ENCODE measurements at regions of chr19 and their contacts with region 1.

Region 1: GRCh38 chr19:16062789-16063188 is 13.5 kb upstream of the TPM4 start:
- DNase-seq: peak; percentile 78
- ATAC-seq: peak; percentile 85
- H3K4me3 ChIP-seq: no peak overlapping the region
- H3K4me3 Mint-ChIP-seq: no peak overlapping the region
- H3K27ac ChIP-seq: no peak overlapping the region
- H3K27ac Mint-ChIP-seq: no peak overlapping the region
- H3K4me1 ChIP-seq: peaks cover 4 to 11% of the 10 kb centered on the region in 2 donors
- H3K4me1 Mint-ChIP-seq: peaks cover 12% of the 10 kb centered on the region
- H3K27me3 ChIP-seq: no peaks in the 10 kb centered on the region
- H3K27me3 Mint-ChIP-seq: peaks cover 3% of the 10 kb centered on the region
- CTCF ChIP-seq: peak; percentile 96

Region 2: DNA sequence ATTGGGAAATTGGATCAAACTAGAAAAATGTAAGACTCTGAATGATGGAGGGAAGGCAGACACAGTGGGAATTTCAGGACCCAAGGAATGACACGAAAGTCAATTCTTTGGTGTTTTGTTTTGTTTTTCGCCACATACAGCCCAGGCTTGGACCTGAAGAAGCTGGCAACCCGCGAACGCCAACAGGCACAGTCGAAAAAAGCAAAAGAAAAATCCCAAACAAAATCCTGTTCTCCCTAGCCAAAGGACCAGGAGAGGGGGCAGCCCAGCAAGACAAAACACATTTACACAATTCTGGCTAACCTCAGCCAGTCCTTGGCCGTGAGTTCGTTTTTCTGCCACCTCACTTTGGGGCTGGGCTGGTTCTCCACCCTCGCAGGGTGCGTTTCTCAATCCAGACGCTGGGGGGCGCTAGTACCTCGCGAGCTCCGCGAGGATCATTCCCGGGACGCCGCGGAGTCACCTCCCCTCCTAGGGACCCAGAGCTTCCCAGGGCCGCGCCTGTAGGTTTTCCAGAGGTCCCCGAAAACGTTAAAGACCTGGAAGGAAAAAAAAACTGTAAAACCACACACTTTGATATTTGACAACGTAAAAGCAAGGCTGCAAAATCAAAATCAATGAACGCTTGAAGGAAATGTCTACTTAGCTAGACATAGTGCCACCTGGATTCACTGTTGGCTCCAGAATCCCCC is 21.3 kb before region 1 on chr19:
- CTCF ChIA-PET with region 1: interaction called, 19 read pairs
- POLR2A ChIA-PET with region 1: interaction called, 3 read pairs
- intact Hi-C with region 1: no loop called
- DNase-seq: peak; percentile 80
- ATAC-seq: peak; percentile 86
- H3K4me3 ChIP-seq: no peak overlapping the region
- H3K4me3 Mint-ChIP-seq: no peak overlapping the region
- H3K27ac ChIP-seq: no peak overlapping the region
- H3K27ac Mint-ChIP-seq: no peak overlapping the region
- H3K4me1 ChIP-seq: peaks cover 7 to 8% of the 10 kb centered on the region in 2 donors
- H3K4me1 Mint-ChIP-seq: peaks cover 10% of the 10 kb centered on the region
- H3K27me3 ChIP-seq: peaks cover 0 to 4% (median 0%) of the 10 kb centered on the region in 4 experiments
- H3K27me3 Mint-ChIP-seq: no peaks in the 10 kb centered on the region
- CTCF ChIP-seq: peak; percentile 95

Region 3: DNA sequence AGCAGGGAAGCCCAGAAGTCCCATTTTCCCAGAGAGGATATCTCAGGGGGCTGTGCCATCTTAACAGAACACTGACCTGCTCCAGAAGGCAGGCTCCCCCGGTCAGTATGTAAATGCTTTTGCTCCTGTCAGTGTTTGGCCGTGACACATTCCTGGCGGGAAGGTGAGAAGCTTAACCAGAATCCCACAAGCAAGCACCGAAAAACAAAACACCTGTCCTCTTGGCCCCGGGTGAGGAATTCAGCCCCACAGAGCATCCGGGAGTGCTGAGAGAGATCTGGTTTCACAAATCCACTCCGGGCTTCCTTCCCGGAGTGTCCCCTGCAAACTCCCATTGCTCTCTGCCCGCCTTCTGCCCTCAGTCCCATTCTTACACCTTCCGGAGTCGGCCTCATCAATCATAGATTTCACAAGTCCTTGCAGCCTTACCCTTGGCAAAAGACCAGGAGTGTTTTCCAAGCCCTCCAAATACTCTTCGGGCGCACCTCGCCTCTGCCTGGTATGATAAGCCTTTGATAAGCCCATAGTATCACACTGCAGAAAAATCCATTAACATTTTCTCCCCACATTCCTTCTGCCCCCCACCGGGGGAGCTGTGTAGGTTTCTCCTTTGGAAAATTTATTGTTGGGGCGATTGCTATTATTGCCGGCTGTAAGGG is 25.7 kb after region 1 on chr19:
- CTCF ChIA-PET with region 1: interaction called, 57 read pairs
- POLR2A ChIA-PET with region 1: interaction called, 6 read pairs
- intact Hi-C with region 1: no loop called
- DNase-seq: no peak
- ATAC-seq: no peak
- H3K4me3 ChIP-seq: no peak overlapping the region
- H3K4me3 Mint-ChIP-seq: no peak overlapping the region
- H3K27ac ChIP-seq: no peak overlapping the region
- H3K27ac Mint-ChIP-seq: peak overlapping the region; percentile 41
- H3K4me1 ChIP-seq: peaks cover 18 to 27% of the 10 kb centered on the region in 2 donors
- H3K4me1 Mint-ChIP-seq: peaks cover 24% of the 10 kb centered on the region
- H3K27me3 ChIP-seq: no peaks in the 10 kb centered on the region
- H3K27me3 Mint-ChIP-seq: no peaks in the 10 kb centered on the region
- CTCF ChIP-seq: no peak

Region 4: DNA sequence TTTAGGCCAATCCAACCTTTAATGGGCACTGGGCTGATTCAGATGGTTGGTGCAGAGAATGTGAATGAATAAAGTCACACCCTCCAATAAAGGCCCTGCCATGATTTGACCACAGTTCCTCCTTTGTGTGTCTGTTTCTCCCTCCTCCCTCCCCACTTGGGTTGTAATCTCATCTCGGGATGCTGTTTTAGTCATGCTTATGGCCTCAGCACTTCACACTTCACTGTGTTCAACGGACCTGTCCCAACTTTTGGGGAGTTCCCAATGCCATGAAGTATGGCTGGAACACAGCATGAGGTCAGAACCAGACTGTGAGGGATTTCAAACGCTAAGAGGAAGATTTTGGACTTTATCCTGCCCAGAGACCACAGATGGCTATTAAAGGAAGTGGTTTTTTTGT is 43.3 kb after region 1 on chr19:
- CTCF ChIA-PET with region 1: interaction called, 28 read pairs
- POLR2A ChIA-PET with region 1: interaction called, 3 read pairs
- intact Hi-C with region 1: loop called (anchors 1 kb)
- DNase-seq: no peak
- ATAC-seq: no peak
- H3K4me3 ChIP-seq: no peak overlapping the region
- H3K4me3 Mint-ChIP-seq: no peak overlapping the region
- H3K27ac ChIP-seq: peak overlapping the region; percentile 37 to 47
- H3K27ac Mint-ChIP-seq: peak overlapping the region; percentile 85
- H3K4me1 ChIP-seq: peaks cover 17 to 43% of the 10 kb centered on the region in 2 donors
- H3K4me1 Mint-ChIP-seq: peaks cover 25% of the 10 kb centered on the region
- H3K27me3 ChIP-seq: no peaks in the 10 kb centered on the region
- H3K27me3 Mint-ChIP-seq: no peaks in the 10 kb centered on the region
- CTCF ChIP-seq: no peak

Region 5: GRCh38 chr19:16118489-16119033 is 55.8 kb after region 1 on chr19:
- CTCF ChIA-PET with region 1: interaction called, 28 read pairs
- POLR2A ChIA-PET with region 1: no interaction called
- intact Hi-C with region 1: no loop called
- DNase-seq: peak; percentile 93
- ATAC-seq: peak; percentile 91
- H3K4me3 ChIP-seq: peak overlapping the region in 3 of 5 experiments; percentile 11 to 48 (median 23)
- H3K4me3 Mint-ChIP-seq: peak overlapping the region; percentile 70
- H3K27ac ChIP-seq: peak overlapping the region; percentile 86 to 88
- H3K27ac Mint-ChIP-seq: peak overlapping the region; percentile 97
- H3K4me1 ChIP-seq: peaks cover 64 to 75% of the 10 kb centered on the region in 2 donors
- H3K4me1 Mint-ChIP-seq: peaks cover 66% of the 10 kb centered on the region
- H3K27me3 ChIP-seq: no peaks in the 10 kb centered on the region
- H3K27me3 Mint-ChIP-seq: no peaks in the 10 kb centered on the region
- CTCF ChIP-seq: no peak

Region 6: GRCh38 chr19:16244091-16244490 is 181.3 kb after region 1 on chr19:
- CTCF ChIA-PET with region 1: no interaction called
- POLR2A ChIA-PET with region 1: no interaction called
- intact Hi-C with region 1: no loop called
- DNase-seq: no peak
- ATAC-seq: no peak
- H3K4me3 ChIP-seq: no peak overlapping the region
- H3K4me3 Mint-ChIP-seq: no peak overlapping the region
- H3K27ac ChIP-seq: no peak overlapping the region
- H3K27ac Mint-ChIP-seq: peak overlapping the region; percentile 27
- H3K4me1 ChIP-seq: peaks cover 23 to 33% of the 10 kb centered on the region in 2 donors
- H3K4me1 Mint-ChIP-seq: peaks cover 21% of the 10 kb centered on the region
- H3K27me3 ChIP-seq: no peaks in the 10 kb centered on the region
- H3K27me3 Mint-ChIP-seq: no peaks in the 10 kb centered on the region
- CTCF ChIP-seq: no peak

Measured in B cell (primary cell).